CD8-positive, alpha-beta T cell (primary cell): ENCODE measurements at regions of chr7 and their contacts with region 1.

Region 1: GRCh38 chr7:7157177-7157886 is 25.0 kb upstream of the C1GALT1 start:
- DNase-seq: peak; percentile 23 to 88 (median 68)
- ATAC-seq: peak; percentile 94
- H3K4me3 ChIP-seq: peak overlapping the region; percentile 39 to 42
- H3K4me3 Mint-ChIP-seq: peak overlapping the region; percentile 75
- H3K27ac ChIP-seq: peak overlapping the region; percentile 32 to 68
- H3K27ac Mint-ChIP-seq: peak overlapping the region; percentile 85
- H3K4me1 ChIP-seq: peaks cover 58% of the 10 kb centered on the region
- H3K4me1 Mint-ChIP-seq: peaks cover 61% of the 10 kb centered on the region
- H3K27me3 ChIP-seq: no peaks in the 10 kb centered on the region
- H3K27me3 Mint-ChIP-seq: no peaks in the 10 kb centered on the region
- CTCF ChIP-seq: no peak

Region 2: GRCh38 chr7:7176421-7177043 is 19.2 kb after region 1 on chr7:
- CTCF ChIA-PET with region 1: interaction called, 13 read pairs
- POLR2A ChIA-PET with region 1: interaction called, 17 read pairs
- intact Hi-C with region 1: loop called (anchors 1 to 2 kb)
- DNase-seq: peak in 1 of 9 experiments; percentile 38
- ATAC-seq: no peak
- H3K4me3 ChIP-seq: no peak overlapping the region
- H3K4me3 Mint-ChIP-seq: no peak overlapping the region
- H3K27ac ChIP-seq: no peak overlapping the region
- H3K27ac Mint-ChIP-seq: peak overlapping the region; percentile 39
- H3K4me1 ChIP-seq: peaks cover 6% of the 10 kb centered on the region
- H3K4me1 Mint-ChIP-seq: peaks cover 21% of the 10 kb centered on the region
- H3K27me3 ChIP-seq: no peaks in the 10 kb centered on the region
- H3K27me3 Mint-ChIP-seq: no peaks in the 10 kb centered on the region
- CTCF ChIP-seq: no peak

Region 3: GRCh38 chr7:7751243-7752092 is 594.1 kb after region 1 on chr7:
- CTCF ChIA-PET with region 1: no interaction called
- POLR2A ChIA-PET with region 1: no interaction called
- intact Hi-C with region 1: no loop called
- DNase-seq: no peak
- ATAC-seq: no peak
- H3K4me3 ChIP-seq: no peak overlapping the region
- H3K4me3 Mint-ChIP-seq: no peak overlapping the region
- H3K27ac ChIP-seq: no peak overlapping the region
- H3K27ac Mint-ChIP-seq: no peak overlapping the region
- H3K4me1 ChIP-seq: no peaks in the 10 kb centered on the region
- H3K4me1 Mint-ChIP-seq: peaks cover 2% of the 10 kb centered on the region
- H3K27me3 ChIP-seq: no peaks in the 10 kb centered on the region
- H3K27me3 Mint-ChIP-seq: no peaks in the 10 kb centered on the region
- CTCF ChIP-seq: no peak